Caco-2 (cell line): ENCODE measurements at regions of chr11 and their contacts with region 1.

Region 1: DNA sequence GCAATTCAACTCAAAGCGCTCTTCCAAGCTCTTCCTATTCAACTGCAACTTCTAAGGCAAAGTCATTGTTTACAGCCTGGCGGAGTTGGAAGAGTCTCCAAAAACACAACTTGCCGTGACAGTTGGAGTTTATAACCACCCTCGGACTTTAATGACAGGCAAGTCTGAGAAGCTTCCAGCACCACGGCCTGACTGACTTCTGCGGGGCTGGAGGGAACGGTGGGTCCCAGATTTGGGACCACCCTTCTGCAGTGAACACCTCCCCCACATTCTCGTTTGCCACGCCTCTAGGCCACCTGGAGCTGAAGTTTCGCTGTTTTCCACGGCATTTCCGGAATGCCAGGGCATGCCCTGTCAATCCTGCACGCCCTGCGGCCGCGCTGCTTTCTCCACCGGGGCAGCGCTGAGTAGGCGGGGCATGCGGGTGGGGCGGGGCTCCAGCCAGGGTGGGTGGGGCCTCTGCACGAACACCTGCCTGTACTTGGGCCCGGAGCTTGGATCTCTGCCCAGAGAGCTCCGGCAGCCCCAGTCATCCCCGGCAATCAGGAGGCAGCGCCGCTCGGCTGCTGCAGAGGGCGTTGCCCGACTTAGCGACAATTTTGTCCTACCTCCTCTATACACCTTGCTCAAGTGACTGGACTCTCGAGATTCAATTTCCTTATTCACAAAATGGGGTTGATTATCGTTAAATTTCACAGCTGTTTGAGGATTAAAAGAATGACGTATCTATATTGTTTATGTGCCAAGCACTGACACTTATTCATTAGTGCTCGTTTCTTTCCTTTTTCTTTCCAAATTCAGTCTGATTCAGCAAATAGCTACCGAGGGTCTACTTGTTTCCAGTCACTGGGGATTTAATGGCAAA is 48.7 kb upstream of the BIRC3 start:
- DNase-seq: peak; percentile 97 to 98
- H3K4me3 ChIP-seq: peak overlapping the region; percentile 67
- H3K4me3 Mint-ChIP-seq: peak overlapping the region; percentile 90
- H3K27ac Mint-ChIP-seq: peak overlapping the region; percentile 79
- H3K4me1 ChIP-seq: peaks cover 33% of the 10 kb centered on the region
- H3K4me1 Mint-ChIP-seq: peaks cover 33% of the 10 kb centered on the region
- H3K27me3 ChIP-seq: no peaks in the 10 kb centered on the region
- H3K27me3 Mint-ChIP-seq: no peaks in the 10 kb centered on the region
- CTCF ChIP-seq: peak; percentile 61 to 97

Region 2: GRCh38 chr11:102047305-102047924 is 221.1 kb before region 1 on chr11 and contains the start of gene CFAP300:
- CTCF ChIA-PET with region 1: interaction called, 3 read pairs
- POLR2A ChIA-PET with region 1: no interaction called
- intact Hi-C with region 1: loop called (anchors 5 kb)
- DNase-seq: peak; percentile 92 to 94
- H3K4me3 ChIP-seq: peak within 1 kb of the TSS; percentile 66
- H3K4me3 Mint-ChIP-seq: peak within 1 kb of the TSS; percentile 93
- H3K27ac Mint-ChIP-seq: peak within 1 kb of the TSS; percentile 95
- H3K4me1 ChIP-seq: no peaks in the 10 kb centered on the region
- H3K4me1 Mint-ChIP-seq: peaks cover 12% of the 10 kb centered on the region
- H3K27me3 ChIP-seq: no peaks in the 10 kb centered on the region
- H3K27me3 Mint-ChIP-seq: no peaks in the 10 kb centered on the region
- CTCF ChIP-seq: no peak
- total RNA-seq, gene CFAP300: 2.2 and 3.9 TPM in 2 replicates

Region 3: GRCh38 chr11:102192349-102193066 is 76.1 kb before region 1 on chr11:
- CTCF ChIA-PET with region 1: interaction called, 7 read pairs
- POLR2A ChIA-PET with region 1: no interaction called
- intact Hi-C with region 1: loop called (anchors 1 kb)
- DNase-seq: peak; percentile 92 to 93
- H3K4me3 ChIP-seq: no peak overlapping the region
- H3K4me3 Mint-ChIP-seq: peak overlapping the region; percentile 20
- H3K27ac Mint-ChIP-seq: peak overlapping the region; percentile 25
- H3K4me1 ChIP-seq: peaks cover 71% of the 10 kb centered on the region
- H3K4me1 Mint-ChIP-seq: peaks cover 56% of the 10 kb centered on the region
- H3K27me3 ChIP-seq: no peaks in the 10 kb centered on the region
- H3K27me3 Mint-ChIP-seq: no peaks in the 10 kb centered on the region
- CTCF ChIP-seq: no peak

Region 4: DNA sequence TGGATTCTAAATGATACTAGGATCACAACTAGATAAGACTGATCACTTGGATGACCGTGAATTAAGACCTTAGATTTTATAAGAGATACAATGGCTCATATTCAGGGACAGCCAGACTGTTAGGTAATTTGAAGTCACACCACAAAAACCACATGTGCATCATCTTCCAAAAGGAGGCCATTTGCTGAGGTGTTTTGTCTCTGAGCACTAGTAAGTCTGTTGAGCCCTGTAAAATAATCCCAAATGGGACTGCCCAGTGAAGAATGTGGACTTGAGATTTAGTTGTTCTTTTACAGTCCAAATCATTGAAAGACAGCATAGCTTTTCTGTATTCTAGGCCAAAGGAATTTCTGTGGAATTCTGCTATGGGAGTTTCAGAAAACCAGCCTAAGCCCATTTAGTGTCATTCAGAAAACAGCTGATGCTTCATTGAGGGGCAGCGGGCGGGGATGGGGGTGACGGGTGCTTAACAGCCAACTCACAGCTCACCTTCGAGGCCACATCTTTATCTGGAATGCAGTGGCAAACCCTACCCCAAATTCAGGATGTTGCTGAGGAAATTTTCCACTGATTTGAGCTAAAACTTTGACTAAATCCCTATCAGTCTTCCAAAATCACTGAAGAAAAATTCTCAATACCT is 31.3 kb before region 1 on chr11:
- CTCF ChIA-PET with region 1: interaction called, 3 read pairs
- POLR2A ChIA-PET with region 1: interaction called, 3 read pairs
- intact Hi-C with region 1: loop called (anchors 1 kb)
- DNase-seq: no peak
- H3K4me3 ChIP-seq: no peak overlapping the region
- H3K4me3 Mint-ChIP-seq: no peak overlapping the region
- H3K27ac Mint-ChIP-seq: peak overlapping the region; percentile 24
- H3K4me1 ChIP-seq: 0 out of 2 replicates have a peak, but pooled peaks cover 10% of the 10 kb centered on the region
- H3K4me1 Mint-ChIP-seq: peaks cover 17% of the 10 kb centered on the region
- H3K27me3 ChIP-seq: no peaks in the 10 kb centered on the region
- H3K27me3 Mint-ChIP-seq: no peaks in the 10 kb centered on the region
- CTCF ChIP-seq: no peak

Region 5: DNA sequence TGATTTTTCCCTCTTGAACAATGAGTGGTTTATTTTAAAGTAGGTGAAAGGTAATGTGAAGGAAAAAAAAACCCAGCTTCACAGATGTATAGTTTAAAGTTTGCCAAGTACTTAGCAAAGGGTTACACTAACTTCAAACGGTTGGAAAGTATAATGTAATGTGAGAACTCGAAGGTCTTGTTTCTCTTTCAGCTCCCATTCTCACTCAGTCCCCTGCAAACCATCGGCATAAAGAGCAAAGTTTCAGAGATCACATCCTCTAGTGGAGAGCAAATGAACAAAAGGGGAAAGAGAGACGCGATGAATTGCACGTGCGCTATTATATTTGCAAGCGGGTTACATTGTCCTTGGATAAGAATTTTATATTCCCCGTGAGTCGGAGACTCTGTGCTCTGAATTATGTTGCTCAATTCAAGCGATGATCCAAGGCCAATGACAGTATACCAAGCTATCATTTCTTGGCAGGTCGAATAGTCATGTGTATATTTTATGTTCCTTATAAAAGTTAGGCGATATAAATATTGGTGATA is 11.1 kb after region 1 on chr11:
- CTCF ChIA-PET with region 1: interaction called, 14 read pairs
- POLR2A ChIA-PET with region 1: interaction called, 6 read pairs
- intact Hi-C with region 1: no loop called
- DNase-seq: peak in 1 of 2 experiments; percentile 43
- H3K4me3 ChIP-seq: no peak overlapping the region
- H3K4me3 Mint-ChIP-seq: peak overlapping the region; percentile 56
- H3K27ac Mint-ChIP-seq: peak overlapping the region; percentile 13
- H3K4me1 ChIP-seq: peaks cover 24% of the 10 kb centered on the region
- H3K4me1 Mint-ChIP-seq: peaks cover 29% of the 10 kb centered on the region
- H3K27me3 ChIP-seq: no peaks in the 10 kb centered on the region
- H3K27me3 Mint-ChIP-seq: no peaks in the 10 kb centered on the region
- CTCF ChIP-seq: peak; percentile 18 to 32

Region 6: DNA sequence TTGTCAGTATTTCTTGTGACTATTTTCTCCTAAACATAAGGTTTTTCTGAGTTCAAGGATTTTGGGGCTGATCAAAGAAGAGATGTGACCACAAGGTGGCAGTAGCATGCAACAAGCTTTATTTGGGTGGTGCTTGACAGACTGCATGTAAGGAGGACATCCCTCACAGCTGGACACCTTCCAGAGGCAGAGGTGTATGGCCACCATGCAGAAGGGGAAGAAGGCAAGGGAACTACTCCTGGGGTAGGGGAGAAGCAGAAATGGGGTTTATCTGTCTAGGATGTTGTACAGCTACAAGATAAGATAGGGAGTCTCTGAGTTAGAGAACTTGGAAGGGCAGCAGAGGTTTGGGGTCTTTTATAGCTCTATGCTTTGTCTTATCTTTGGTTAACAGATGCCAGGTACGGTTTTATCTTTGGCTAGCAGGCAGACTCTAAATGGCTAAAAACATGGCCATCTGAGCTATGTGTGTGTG is 73.3 kb after region 1 on chr11:
- CTCF ChIA-PET with region 1: interaction called, 12 read pairs
- POLR2A ChIA-PET with region 1: no interaction called
- intact Hi-C with region 1: no loop called
- DNase-seq: peak; percentile 86 to 87
- H3K4me3 ChIP-seq: no peak overlapping the region
- H3K4me3 Mint-ChIP-seq: no peak overlapping the region
- H3K27ac Mint-ChIP-seq: no peak overlapping the region
- H3K4me1 ChIP-seq: peaks cover 4% of the 10 kb centered on the region; the same call in 1 of the 2 replicates
- H3K4me1 Mint-ChIP-seq: peaks cover 16% of the 10 kb centered on the region
- H3K27me3 ChIP-seq: no peaks in the 10 kb centered on the region
- H3K27me3 Mint-ChIP-seq: no peaks in the 10 kb centered on the region
- CTCF ChIP-seq: peak; percentile 92 to 95

Region 7: DNA sequence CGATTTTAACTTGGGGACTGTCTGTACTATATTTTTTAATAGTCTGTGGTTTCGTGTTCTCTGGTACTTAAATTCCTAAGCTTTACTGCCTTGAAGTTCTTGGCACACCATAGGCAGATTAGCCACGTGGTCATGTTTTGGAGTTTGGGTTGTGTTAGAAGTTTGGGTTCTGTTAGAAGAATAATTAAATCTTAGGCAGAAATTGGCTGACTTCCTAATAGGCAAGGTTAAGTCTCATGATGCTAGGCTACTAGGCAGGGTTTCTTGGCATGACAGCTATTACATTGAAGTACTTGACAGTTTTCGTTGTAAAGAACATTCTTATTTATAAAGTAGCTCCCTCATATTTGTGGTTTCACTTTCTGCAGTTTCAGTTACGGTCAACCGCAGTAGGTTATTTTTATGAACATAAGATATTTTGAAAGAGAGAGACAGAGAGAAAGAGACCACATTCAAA is 292.0 kb after region 1 on chr11:
- CTCF ChIA-PET with region 1: no interaction called
- POLR2A ChIA-PET with region 1: no interaction called
- intact Hi-C with region 1: no loop called
- DNase-seq: no peak
- H3K4me3 ChIP-seq: no peak overlapping the region
- H3K4me3 Mint-ChIP-seq: no peak overlapping the region
- H3K27ac Mint-ChIP-seq: no peak overlapping the region
- H3K4me1 ChIP-seq: peaks cover 22% of the 10 kb centered on the region
- H3K4me1 Mint-ChIP-seq: no peaks in the 10 kb centered on the region
- H3K27me3 ChIP-seq: no peaks in the 10 kb centered on the region
- H3K27me3 Mint-ChIP-seq: no peaks in the 10 kb centered on the region
- CTCF ChIP-seq: no peak